ENCODE measurements at regions of chr21 and their contacts with region 1.

Region 1: DNA sequence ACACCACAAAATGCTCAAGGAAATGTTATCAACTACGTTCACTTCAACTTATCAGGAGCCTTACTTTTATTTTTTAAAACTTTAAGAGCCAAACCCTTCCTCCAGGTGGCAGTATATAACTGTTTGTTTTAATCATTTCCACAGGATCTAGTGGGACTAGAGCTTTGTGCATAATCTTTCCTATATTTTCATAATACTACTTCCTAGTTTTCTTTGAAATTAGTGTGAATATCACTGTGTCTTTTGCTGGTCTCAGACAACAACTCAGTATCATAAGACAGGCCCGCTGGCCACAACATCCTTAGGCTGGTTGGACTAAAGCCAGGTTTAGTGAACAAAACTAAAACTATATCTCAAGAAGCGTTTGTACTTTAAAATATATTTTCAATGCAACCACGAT is 145.5 kb downstream of the TIAM1 start:
- DNase-seq: no peak
- ATAC-seq: no peak
- H3K4me3 Mint-ChIP-seq: no peak overlapping the region
- H3K27ac Mint-ChIP-seq: no peak overlapping the region
- H3K4me1 Mint-ChIP-seq: peaks cover 17% of the 10 kb centered on the region
- H3K27me3 Mint-ChIP-seq: no peaks in the 10 kb centered on the region
- CTCF ChIP-seq: peak; percentile 17

Region 2: DNA sequence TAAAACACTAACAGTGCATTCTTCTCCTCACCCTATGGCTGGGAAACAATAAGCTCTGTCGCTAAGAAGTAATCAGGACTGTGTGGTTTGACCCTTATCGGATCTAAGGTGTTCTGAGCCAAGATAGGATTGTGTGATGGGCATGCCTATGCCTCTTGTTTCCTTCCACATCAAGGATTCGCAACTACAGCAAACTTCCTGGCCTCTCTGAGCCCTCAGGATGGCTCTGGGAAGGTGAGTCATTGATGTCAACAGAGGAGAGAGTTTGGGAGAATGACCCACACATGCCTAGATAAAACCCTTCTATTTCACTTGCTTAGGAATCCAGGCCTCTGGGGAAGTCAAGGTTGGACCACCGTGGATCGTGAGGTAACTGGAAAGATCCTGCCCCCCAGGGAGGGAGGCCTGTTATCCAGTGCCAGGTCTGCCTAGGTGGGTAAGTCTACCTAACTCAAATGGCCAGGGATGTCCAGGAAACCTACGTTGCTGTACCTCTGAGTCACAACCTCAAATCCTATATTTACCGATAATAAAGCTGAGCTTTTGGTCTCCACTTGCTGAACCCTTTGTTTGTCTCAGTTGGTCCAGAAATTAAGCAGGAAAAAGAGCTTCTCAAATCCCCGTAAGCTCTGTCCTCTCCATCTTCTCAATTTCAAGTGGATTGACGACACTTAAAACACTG is 118.1 kb after region 1 on chr21:
- CTCF ChIA-PET with region 1: no interaction called
- POLR2A ChIA-PET with region 1: no interaction called
- intact Hi-C with region 1: no loop called
- DNase-seq: no peak
- ATAC-seq: no peak
- H3K4me3 Mint-ChIP-seq: no peak overlapping the region
- H3K27ac Mint-ChIP-seq: no peak overlapping the region
- H3K4me1 Mint-ChIP-seq: no peaks in the 10 kb centered on the region
- H3K27me3 Mint-ChIP-seq: no peaks in the 10 kb centered on the region
- CTCF ChIP-seq: no peak

Region 3: DNA sequence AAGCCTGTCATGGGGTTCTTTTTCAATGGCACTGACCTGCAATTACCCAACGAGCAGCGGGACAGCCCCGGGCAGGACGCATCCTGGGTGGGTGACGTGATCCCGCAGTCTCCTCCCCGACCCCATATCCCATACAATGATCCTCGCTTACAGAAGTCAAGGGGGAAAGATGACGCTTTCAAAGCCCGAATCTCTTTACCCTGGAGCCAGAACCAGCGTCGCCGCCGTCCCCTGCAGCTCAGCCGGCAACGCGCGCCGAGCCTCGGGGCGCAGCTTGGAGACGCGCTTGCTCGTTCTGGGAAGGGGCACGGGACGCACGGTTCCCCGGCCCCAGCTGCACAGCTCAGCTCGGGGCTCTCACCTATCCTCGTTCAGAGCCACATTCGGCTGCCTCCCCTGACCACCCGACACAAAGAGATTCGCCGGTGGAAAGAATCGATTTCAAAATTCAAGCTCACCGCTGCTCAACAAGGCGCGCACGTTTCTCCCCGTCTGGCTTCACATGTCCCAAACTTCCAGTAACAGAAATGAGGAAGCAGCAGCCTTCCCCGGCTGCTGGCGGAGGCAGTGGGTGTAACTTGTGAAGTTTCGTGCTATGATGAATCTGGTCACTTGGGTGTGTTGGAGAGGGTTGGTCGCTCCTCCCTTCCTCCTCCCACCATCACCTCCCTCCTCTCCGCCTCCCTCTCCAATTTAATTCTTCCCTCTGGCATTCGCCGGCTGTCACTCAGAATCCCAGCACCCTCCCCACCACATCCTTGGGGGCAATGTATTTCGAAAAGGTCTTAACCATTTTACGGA is 145.3 kb after region 1 on chr21 and contains the start of gene TIAM1:
- CTCF ChIA-PET with region 1: no interaction called
- POLR2A ChIA-PET with region 1: no interaction called
- intact Hi-C with region 1: loop called (anchors 5 kb)
- DNase-seq: no peak
- ATAC-seq: no peak
- H3K4me3 Mint-ChIP-seq: peak within 1 kb of the TSS; percentile 28
- H3K27ac Mint-ChIP-seq: no peak within 1 kb of the TSS
- H3K4me1 Mint-ChIP-seq: peaks cover 12% of the 10 kb centered on the region
- H3K27me3 Mint-ChIP-seq: peaks cover 32% of the 10 kb centered on the region
- CTCF ChIP-seq: no peak
- total RNA-seq, gene TIAM1: 0.84 and 0.98 TPM in 2 replicates

Region 4: DNA sequence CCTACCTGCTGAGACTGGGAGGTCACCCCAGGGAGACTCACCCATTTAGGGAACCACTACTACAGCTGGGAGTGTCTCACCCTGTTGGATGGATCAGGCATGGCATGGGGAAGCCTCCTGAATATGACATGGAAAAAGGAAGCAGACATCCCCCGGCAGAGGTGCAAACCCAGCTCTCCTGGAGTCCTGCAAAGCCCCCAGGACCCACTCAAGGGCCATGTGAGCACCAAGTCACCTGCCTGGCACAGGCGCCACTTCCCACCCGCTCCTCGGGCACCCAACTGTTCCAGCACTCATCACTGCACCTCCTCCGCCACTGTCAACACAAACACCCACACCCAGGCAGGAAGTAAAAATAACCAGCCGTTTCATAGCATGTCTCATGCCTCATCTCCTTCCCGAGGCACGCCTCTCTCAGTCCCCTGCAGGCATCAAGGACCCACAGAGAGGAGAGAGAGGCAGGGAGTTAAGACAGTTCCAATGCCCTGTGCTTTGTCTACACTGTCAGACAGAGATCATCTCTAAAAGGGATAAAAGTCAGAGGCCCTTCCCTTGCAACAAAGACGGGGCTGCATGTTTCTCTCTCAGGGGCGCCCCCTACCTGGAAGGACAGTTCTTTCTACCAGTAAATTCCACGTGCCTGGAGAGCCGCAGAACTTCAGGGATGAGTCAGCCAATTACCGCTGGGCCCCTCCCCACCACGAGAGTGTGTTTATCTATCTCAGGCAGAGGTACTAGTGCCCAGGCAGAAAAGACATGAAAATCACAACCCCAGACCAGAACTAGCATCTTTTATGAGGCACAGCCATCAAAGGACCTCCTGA is 310.8 kb after region 1 on chr21:
- CTCF ChIA-PET with region 1: no interaction called
- POLR2A ChIA-PET with region 1: no interaction called
- intact Hi-C with region 1: loop called (anchors 5 kb)
- DNase-seq: no peak
- ATAC-seq: peak; percentile 41
- H3K4me3 Mint-ChIP-seq: no peak overlapping the region
- H3K27ac Mint-ChIP-seq: no peak overlapping the region
- H3K4me1 Mint-ChIP-seq: peaks cover 37% of the 10 kb centered on the region
- H3K27me3 Mint-ChIP-seq: no peaks in the 10 kb centered on the region
- CTCF ChIP-seq: no peak

Region 5: DNA sequence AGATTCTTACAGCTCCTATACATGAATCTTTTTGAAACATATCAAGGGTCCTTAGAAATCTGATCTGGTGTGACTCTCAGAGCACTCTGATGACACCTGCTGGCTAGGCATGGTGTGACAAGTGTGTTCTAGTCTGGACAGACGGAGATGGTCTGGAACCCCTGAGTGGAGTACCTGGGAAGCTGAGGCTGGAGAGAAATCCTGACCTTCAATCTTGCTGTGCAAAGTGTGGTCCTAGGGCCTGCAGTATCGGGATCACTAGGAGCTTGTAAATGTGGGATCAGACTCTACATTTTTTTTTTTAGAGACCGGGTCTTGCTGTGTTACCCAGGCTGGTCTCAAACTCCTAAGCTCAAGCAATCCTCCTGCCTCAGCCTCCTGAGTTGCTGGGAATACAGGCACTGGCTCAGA is 382.3 kb after region 1 on chr21:
- CTCF ChIA-PET with region 1: interaction called, 87 read pairs
- POLR2A ChIA-PET with region 1: interaction called, 3 read pairs
- intact Hi-C with region 1: loop called (anchors 1 kb)
- DNase-seq: peak; percentile 42
- ATAC-seq: peak; percentile 85
- H3K4me3 Mint-ChIP-seq: no peak overlapping the region
- H3K27ac Mint-ChIP-seq: no peak overlapping the region
- H3K4me1 Mint-ChIP-seq: no peaks in the 10 kb centered on the region
- H3K27me3 Mint-ChIP-seq: peaks cover 8% of the 10 kb centered on the region
- CTCF ChIP-seq: no peak

Region 6: DNA sequence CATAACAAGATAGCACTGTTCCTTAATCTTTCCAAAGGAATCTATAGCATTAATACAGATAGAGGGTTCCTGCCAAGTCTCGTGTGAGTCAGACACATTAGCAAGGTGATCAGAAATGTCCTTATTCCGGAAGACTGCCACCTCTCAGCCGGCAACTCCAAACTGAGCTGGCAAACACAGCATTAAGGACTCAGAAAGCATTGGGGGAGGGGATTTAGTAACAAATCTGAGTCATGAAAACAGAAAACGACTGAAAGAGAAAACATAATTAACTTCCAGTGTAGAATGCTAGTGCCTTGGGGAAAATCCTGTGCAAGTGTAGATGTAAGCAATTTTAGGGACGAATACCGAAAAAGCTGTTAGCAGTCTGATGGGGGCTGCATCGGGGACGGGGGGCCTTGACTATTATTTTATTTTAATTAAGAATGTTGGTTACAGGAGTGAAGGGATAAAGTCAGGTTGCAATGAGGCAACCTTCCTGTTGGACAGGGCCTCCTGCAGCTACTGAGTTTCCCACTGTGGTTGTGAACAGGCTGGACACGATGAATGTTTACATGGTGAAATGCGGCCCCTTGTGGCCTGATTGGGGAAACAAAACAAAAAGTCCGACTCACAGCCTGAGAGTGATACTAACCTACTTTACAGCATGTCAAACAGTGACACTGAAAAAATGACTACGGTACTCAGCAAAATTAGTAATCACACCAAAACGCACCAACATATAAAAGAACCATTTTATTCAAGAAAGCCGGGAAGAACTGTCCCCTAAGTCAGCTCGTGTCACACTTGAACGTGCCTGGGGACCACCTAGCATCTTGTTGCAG is 1059.6 kb after region 1 on chr21:
- CTCF ChIA-PET with region 1: no interaction called
- POLR2A ChIA-PET with region 1: no interaction called
- intact Hi-C with region 1: loop called (anchors 2 kb)
- DNase-seq: no peak
- ATAC-seq: no peak
- H3K4me3 Mint-ChIP-seq: no peak overlapping the region
- H3K27ac Mint-ChIP-seq: no peak overlapping the region
- H3K4me1 Mint-ChIP-seq: no peaks in the 10 kb centered on the region
- H3K27me3 Mint-ChIP-seq: peaks cover 12% of the 10 kb centered on the region
- CTCF ChIP-seq: no peak